Activated CD4-positive, alpha-beta T cell treated with anti-CD3 and anti-CD28 coated beads, Interleukin-2, amount 10 ng/mL, durations not matched to agents 7 days and 5 days (primary cell): ENCODE measurements at regions of chr6 and their contacts with region 1.

Region 1: GRCh38 chr6:36135053-36135770 is 4.9 kb downstream of the MAPK13 start:
- DNase-seq: no peak
- H3K4me3 Mint-ChIP-seq: no peak overlapping the region
- H3K27ac Mint-ChIP-seq: no peak overlapping the region
- H3K4me1 Mint-ChIP-seq: peaks cover 39% of the 10 kb centered on the region
- H3K27me3 Mint-ChIP-seq: no peaks in the 10 kb centered on the region

Region 2: GRCh38 chr6:36123257-36124139 is 11.7 kb before region 1 on chr6:
- CTCF ChIA-PET with region 1: interaction called, 13 read pairs
- POLR2A ChIA-PET with region 1: interaction called, 8 read pairs
- DNase-seq: peak; percentile 94
- H3K4me3 Mint-ChIP-seq: peak overlapping the region; percentile 39
- H3K27ac Mint-ChIP-seq: peak overlapping the region; percentile 98
- H3K4me1 Mint-ChIP-seq: peaks cover 90% of the 10 kb centered on the region
- H3K27me3 Mint-ChIP-seq: no peaks in the 10 kb centered on the region

Region 3: GRCh38 chr6:36196880-36197548 is 61.8 kb after region 1 on chr6:
- CTCF ChIA-PET with region 1: interaction called, 3 read pairs
- POLR2A ChIA-PET with region 1: interaction called, 11 read pairs
- DNase-seq: peak; percentile 99
- H3K4me3 Mint-ChIP-seq: peak overlapping the region; percentile 86
- H3K27ac Mint-ChIP-seq: peak overlapping the region; percentile 95
- H3K4me1 Mint-ChIP-seq: peaks cover 38% of the 10 kb centered on the region
- H3K27me3 Mint-ChIP-seq: peaks cover 4% of the 10 kb centered on the region